ENCODE measurements at regions of chr17 and their contacts with region 1.

Region 1: DNA sequence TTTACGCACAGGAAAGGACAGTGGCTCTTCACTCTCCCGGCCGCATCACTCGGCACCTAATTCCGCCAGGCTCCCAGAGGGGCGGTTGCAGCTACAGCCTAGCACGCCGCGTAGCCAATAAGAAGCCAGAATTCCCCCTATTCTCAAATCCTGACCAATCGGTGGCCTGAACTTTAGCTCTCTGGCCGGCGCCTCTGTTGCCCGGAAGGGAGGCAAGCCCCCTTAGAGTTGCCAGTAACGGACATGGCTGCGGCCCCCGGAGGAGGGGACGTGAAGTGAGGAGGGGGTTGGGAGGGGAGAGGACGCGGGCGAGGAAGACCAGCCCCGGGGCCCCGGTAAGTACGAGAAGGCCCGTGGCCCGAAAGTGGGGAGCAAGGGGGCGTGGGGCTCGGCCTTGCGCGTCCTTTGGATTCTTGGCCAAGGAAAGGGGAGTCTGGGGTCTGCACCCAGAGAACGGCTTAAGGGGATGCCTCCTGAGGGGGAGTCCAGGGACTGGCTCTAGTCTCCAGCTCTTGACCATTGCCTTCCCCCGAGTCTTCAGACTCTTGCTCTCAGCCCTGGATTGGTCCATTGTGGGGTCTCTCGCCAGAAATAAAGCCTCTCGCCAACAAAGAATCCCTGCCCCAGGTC is at the start of gene TMEM94:
- DNase-seq: peak; percentile 99
- ATAC-seq: peak; percentile 90
- H3K4me3 ChIP-seq: peak within 1 kb of the TSS; percentile 70 to 98 (median 87)
- H3K27ac ChIP-seq: peak within 1 kb of the TSS; percentile 93
- H3K4me1 ChIP-seq: peaks cover 87% of the 10 kb centered on the region
- H3K27me3 ChIP-seq: no peaks in the 10 kb centered on the region; a peak in 1 of 5 replicates
- CTCF ChIP-seq: no peak
- EP300 ChIP-seq: no peak
- POLR2A ChIP-seq: peak; percentile 69 to 82; a peak in 3 of 4 replicates
- RAD21 ChIP-seq: no peak
- total RNA-seq, gene TMEM94: 20.8 and 32.6 TPM in 2 replicates

Region 2: DNA sequence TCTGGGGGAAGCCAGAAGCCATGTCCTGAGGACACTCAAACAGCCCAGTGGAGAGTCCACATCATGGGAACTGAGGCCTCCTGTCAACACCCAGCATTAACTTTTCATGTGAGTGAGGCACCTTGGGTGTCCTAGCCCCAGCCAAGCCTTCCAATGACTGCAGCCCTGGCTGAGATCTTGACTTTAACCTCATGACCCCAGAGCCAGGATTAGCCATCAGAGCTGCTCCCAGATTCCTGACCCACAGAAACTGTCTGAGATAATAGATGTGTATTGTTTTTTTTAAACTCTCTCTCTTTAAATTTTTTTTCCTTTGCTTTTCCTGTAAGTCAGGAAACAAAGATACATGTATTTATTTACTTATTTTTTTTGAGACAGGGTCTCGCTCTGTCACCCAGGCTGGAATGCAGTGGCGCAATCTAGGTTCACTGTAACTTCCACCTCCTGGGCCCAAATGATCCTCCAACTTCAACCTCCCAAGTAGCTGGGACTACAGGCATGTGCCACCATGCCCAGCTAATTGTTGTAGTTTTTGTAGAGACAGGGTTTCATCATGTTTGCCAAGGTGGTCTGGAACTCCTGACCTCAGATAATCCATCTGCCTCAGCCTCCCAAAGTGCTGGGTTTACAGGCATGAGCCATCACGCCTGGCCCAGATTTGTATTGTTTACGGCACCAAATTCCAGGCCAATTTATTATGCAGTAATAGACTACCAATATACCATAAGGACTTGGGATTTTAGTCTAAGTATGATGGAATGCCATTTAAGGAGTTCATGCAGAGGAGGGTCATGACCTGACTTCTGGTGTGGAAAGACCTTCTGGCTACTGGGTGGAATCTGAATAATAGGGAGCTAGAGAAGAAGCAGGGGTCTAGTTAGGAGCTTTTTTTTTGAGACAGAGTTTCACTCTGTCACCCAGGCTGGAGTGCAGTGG is 14.1 kb before region 1 on chr17:
- CTCF ChIA-PET with region 1: no interaction called
- POLR2A ChIA-PET with region 1: interaction called, 26 read pairs
- in situ Hi-C with region 1: no loop called
- intact Hi-C with region 1: no loop called
- DNase-seq: peak; percentile 40
- ATAC-seq: peak; percentile 54
- H3K4me3 ChIP-seq: peak overlapping the region in 1 of 3 experiments; percentile 38; a peak in 2 of 6 replicates
- H3K27ac ChIP-seq: no peak overlapping the region
- H3K4me1 ChIP-seq: peaks cover 64% of the 10 kb centered on the region
- H3K27me3 ChIP-seq: no peaks in the 10 kb centered on the region
- CTCF ChIP-seq: no peak
- EP300 ChIP-seq: peak in 1 of 2 experiments; percentile 56; a peak in 1 of 4 replicates
- POLR2A ChIP-seq: no peak
- RAD21 ChIP-seq: no peak

Region 3: DNA sequence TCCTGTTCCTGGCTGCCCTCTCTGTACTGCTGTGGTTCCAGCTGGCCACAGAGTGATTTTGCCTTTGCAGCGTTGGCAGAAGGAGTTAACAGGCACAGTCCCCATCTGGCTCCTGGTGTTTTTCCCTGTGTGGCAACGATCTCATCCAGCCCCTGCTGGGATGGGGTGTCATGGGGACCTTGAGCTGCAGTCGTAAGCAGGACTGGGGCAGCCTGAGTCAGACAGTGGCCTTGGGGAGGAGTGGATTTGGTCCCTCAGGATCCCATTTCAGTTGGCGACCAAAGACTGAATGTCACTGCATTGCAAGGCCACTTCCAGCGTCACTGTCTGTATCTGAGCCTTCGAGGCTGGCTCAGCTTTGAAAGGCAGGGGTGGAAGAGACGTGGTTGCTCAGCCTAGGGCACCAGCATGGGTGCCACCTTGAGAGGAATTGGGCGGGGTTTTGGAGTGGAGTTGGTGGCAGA is 11.8 kb after region 1 on chr17:
- CTCF ChIA-PET with region 1: no interaction called
- POLR2A ChIA-PET with region 1: interaction called, 11 read pairs
- in situ Hi-C with region 1: no loop called
- intact Hi-C with region 1: no loop called
- DNase-seq: peak; percentile 72
- ATAC-seq: peak; percentile 94
- H3K4me3 ChIP-seq: no peak overlapping the region
- H3K27ac ChIP-seq: peak overlapping the region; percentile 37
- H3K4me1 ChIP-seq: peaks cover 24% of the 10 kb centered on the region
- H3K27me3 ChIP-seq: no peaks in the 10 kb centered on the region
- CTCF ChIP-seq: no peak
- EP300 ChIP-seq: no peak
- POLR2A ChIP-seq: no peak
- RAD21 ChIP-seq: peak; percentile 26; the same call in 1 of the 2 replicates